ENCODE measurements at regions of chr12 and their contacts with region 1.

Region 1: DNA sequence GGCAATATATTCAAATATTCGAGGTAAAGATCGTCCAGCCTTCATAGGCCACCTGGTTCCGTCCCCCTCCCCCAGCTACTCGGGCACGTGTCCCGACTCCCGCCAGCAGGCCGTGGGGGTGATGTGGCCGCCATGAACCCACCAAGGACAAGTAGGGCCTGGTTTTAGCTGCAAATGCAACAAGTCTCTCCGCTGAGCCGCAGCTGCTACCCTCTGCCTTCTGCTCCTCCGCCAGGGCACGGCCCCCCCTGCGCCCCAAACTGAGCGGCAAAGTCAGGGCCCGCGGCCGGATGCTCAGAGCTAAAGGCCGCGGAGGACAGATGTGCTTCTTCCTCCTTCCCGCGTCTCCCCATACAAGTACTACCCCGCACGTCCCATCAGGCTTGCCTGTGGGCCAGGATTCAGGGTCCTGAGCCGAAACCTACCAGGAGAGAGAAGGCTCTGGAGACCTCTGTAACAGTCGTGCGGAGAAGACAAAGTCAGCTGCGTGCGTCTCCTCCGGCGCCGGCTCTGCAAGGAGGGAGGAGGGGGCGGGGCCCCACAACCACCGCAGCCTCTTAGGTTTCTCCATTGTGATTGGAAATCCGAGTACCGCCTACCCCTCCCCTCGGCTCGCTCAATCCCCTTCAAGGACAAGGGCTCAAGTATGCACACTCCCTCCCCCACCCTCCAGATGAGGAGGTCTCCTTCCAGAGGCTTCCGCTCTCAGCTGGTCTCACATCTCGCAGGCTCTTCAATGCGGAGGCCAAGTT is at the start of gene LDHB:
- DNase-seq: peak; percentile 99
- H3K4me3 ChIP-seq: peak within 1 kb of the TSS; percentile 78
- H3K4me3 Mint-ChIP-seq: peak within 1 kb of the TSS; percentile 85
- H3K27ac Mint-ChIP-seq: peak within 1 kb of the TSS; percentile 96
- H3K4me1 ChIP-seq: peaks cover 38% of the 10 kb centered on the region
- H3K4me1 Mint-ChIP-seq: peaks cover 32% of the 10 kb centered on the region
- H3K27me3 ChIP-seq: no peaks in the 10 kb centered on the region
- H3K27me3 Mint-ChIP-seq: no peaks in the 10 kb centered on the region
- CTCF ChIP-seq: no peak
- total RNA-seq, gene LDHB: 1,752 and 1,948 TPM in 2 replicates

Region 2: GRCh38 chr12:21526053-21526452 is 131.4 kb before region 1 on chr12 and contains the start of gene SPX:
- CTCF ChIA-PET with region 1: no interaction called
- POLR2A ChIA-PET with region 1: no interaction called
- intact Hi-C with region 1: loop called (anchors 1 kb)
- DNase-seq: peak in 1 of 2 experiments; percentile 15
- H3K4me3 ChIP-seq: peak within 1 kb of the TSS; percentile 39
- H3K4me3 Mint-ChIP-seq: peak within 1 kb of the TSS; percentile 43
- H3K27ac Mint-ChIP-seq: peak within 1 kb of the TSS; percentile 0
- H3K4me1 ChIP-seq: peaks cover 56% of the 10 kb centered on the region
- H3K4me1 Mint-ChIP-seq: peaks cover 54% of the 10 kb centered on the region
- H3K27me3 ChIP-seq: no peaks in the 10 kb centered on the region
- H3K27me3 Mint-ChIP-seq: no peaks in the 10 kb centered on the region
- CTCF ChIP-seq: no peak
- total RNA-seq, gene SPX: 6.4 and 6.9 TPM in 2 replicates

Region 3: DNA sequence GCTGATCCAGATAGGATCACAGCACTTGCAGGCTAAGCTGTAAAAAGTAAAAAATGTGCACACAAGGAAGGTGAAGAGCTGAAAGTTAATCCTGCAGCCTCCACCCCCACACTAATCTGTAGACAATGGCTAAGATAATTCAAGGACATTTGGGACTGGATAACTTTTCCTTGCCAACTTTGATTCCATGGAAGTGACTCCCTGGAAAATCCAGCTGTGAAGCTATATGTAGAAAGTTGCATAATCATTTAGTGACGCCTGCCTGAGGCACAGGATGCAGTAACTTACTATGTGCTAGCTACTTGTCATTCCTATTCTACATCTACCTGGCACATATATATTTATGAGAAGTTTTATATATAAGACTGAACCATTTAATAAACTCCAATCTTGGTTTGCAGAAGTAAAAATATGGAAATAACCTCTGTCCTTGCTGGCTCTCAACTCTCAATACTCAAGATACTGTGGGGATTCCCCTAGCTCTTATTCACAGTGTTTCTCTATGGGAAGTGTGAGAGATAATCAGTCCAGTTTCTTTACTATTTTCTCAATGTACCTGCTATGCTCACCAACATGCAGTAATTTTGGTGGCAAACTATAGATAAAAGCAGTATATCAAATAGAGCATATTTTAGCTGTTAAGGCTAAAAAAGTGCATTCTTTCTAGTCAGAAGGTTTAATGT is 14.7 kb before region 1 on chr12:
- CTCF ChIA-PET with region 1: no interaction called
- POLR2A ChIA-PET with region 1: interaction called, 6 read pairs
- intact Hi-C with region 1: loop called (anchors 1 kb)
- DNase-seq: no peak
- H3K4me3 ChIP-seq: no peak overlapping the region
- H3K4me3 Mint-ChIP-seq: no peak overlapping the region
- H3K27ac Mint-ChIP-seq: no peak overlapping the region
- H3K4me1 ChIP-seq: peaks cover 86% of the 10 kb centered on the region
- H3K4me1 Mint-ChIP-seq: peaks cover 76% of the 10 kb centered on the region
- H3K27me3 ChIP-seq: no peaks in the 10 kb centered on the region
- H3K27me3 Mint-ChIP-seq: no peaks in the 10 kb centered on the region
- CTCF ChIP-seq: no peak